ENCODE measurements at regions of chr1 and their contacts with region 1.

Region 1: GRCh38 chr1:145858894-145859490 is at the start of gene PIAS3:
- DNase-seq: peak; percentile 98

Region 2: GRCh38 chr1:145845514-145846161 is 13.4 kb before region 1 on chr1 and contains the start of gene NUDT17:
- CTCF ChIA-PET with region 1: interaction called, 97 read pairs
- POLR2A ChIA-PET with region 1: interaction called, 86 read pairs
- DNase-seq: peak; percentile 94

Region 3: GRCh38 chr1:145879775-145880174 is 20.8 kb after region 1 on chr1:
- CTCF ChIA-PET with region 1: interaction called, 4 read pairs
- POLR2A ChIA-PET with region 1: interaction called, 10 read pairs
- DNase-seq: no peak

Region 4: GRCh38 chr1:145891587-145892485 is 32.8 kb after region 1 on chr1:
- CTCF ChIA-PET with region 1: interaction called, 12 read pairs
- POLR2A ChIA-PET with region 1: interaction called, 25 read pairs
- DNase-seq: peak; percentile 95

Region 5: GRCh38 chr1:145927063-145927886 is 68.3 kb after region 1 on chr1 and contains the start of gene RBM8A:
- CTCF ChIA-PET with region 1: no interaction called
- POLR2A ChIA-PET with region 1: interaction called, 22 read pairs
- DNase-seq: peak; percentile 92

Region 6: GRCh38 chr1:145963995-145964901 is 105.3 kb after region 1 on chr1 and contains the starts of genes ANKRD34A and POLR3GL:
- CTCF ChIA-PET with region 1: no interaction called
- POLR2A ChIA-PET with region 1: interaction called, 22 read pairs
- DNase-seq: peak; percentile 90